Left ventricle myocardium inferior (tissue), 1 donor: ENCODE measurements at regions of chr11 and their contacts with region 1.

Region 1: GRCh38 chr11:77088236-77089003 is 14.2 kb upstream of the OMP start:
- DNase-seq: peak; percentile 9
- H3K4me3 ChIP-seq: no peak overlapping the region
- H3K27ac ChIP-seq: no peak overlapping the region
- H3K4me1 ChIP-seq: peaks cover 8% of the 10 kb centered on the region
- H3K27me3 ChIP-seq: no peaks in the 10 kb centered on the region
- CTCF ChIP-seq: no peak

Region 2: GRCh38 chr11:77053217-77054015 is 35.0 kb before region 1 on chr11:
- intact Hi-C with region 1: loop called (anchors 2 kb)
- DNase-seq: no peak
- H3K4me3 ChIP-seq: no peak overlapping the region
- H3K27ac ChIP-seq: no peak overlapping the region
- H3K4me1 ChIP-seq: no peaks in the 10 kb centered on the region
- H3K27me3 ChIP-seq: no peaks in the 10 kb centered on the region
- CTCF ChIP-seq: no peak

Region 3: GRCh38 chr11:77140231-77140851 is 51.9 kb after region 1 on chr11:
- intact Hi-C with region 1: no loop called
- DNase-seq: peak; percentile 65
- H3K4me3 ChIP-seq: no peak overlapping the region
- H3K27ac ChIP-seq: peak overlapping the region; percentile 75
- H3K4me1 ChIP-seq: peaks cover 34% of the 10 kb centered on the region
- H3K27me3 ChIP-seq: peaks cover 14% of the 10 kb centered on the region
- CTCF ChIP-seq: no peak